Mucosa of descending colon (tissue), 3 donors: ENCODE measurements at regions of chr3 and their contacts with region 1.

Region 1: GRCh38 chr3:64399205-64399800 is 174.0 kb upstream of the PRICKLE2 start:
- DNase-seq: peak in 1 of 3 donors; percentile 70
- ATAC-seq: peak; percentile 56
- H3K4me3 ChIP-seq: no peak overlapping the region
- H3K4me1 ChIP-seq: no peaks in the 10 kb centered on the region
- CTCF ChIP-seq: peak; percentile 19

Region 2: DNA sequence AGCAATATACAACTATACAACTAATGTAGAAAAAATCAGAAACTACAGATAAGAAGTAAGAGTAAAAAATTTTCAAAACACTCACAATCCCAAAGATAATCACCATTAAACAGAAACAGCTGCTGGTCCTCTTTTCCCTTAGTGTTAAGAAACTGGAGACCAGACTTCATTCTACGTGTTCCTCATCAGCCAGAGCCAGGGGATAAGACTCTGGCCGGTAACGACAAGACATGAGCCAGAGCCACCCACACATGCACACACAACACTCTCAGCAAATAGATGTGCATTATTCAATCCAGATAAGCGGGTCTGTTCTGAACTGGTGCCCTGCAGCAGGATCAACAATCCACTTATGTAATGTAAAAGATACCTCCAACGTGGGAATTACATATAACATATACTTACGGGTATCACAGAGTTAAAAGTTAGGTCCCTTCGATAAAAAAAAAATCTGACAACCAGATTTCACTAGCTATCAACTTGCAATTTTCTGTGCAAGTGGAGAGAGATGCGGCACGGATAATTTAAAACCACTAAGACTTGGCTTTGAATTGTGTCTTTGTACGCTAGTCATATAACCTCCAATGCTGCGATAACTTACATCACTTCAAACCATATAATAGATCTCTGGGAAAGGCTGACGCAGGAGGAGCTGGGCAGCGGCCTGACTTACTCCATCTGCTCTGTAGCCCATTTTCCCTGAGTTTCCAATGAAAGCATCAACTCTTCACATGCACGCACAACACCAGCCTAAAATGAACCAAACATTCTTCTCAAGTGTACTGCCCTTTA is 191.8 kb before region 1 on chr3:
- intact Hi-C with region 1: no loop called
- DNase-seq: no peak
- ATAC-seq: no peak
- H3K4me3 ChIP-seq: no peak overlapping the region
- H3K4me1 ChIP-seq: no peaks in the 10 kb centered on the region
- CTCF ChIP-seq: no peak

Region 3: GRCh38 chr3:64489361-64490044 is 90.2 kb after region 1 on chr3:
- intact Hi-C with region 1: loop called in 1 of 2 experiments (anchors 5 kb)
- DNase-seq: peak; percentile 48 to 59 (median 56)
- ATAC-seq: peak; percentile 84
- H3K4me3 ChIP-seq: no peak overlapping the region
- H3K4me1 ChIP-seq: no peaks in the 10 kb centered on the region
- CTCF ChIP-seq: no peak